ENCODE measurements at regions of chr10 and their contacts with region 1.

Region 1: GRCh38 chr10:117574498-117575146 is 32.1 kb downstream of the EMX2 start:
- DNase-seq: no peak
- ATAC-seq: no peak
- H3K4me3 ChIP-seq: no peak overlapping the region
- H3K27ac ChIP-seq: no peak overlapping the region
- H3K4me1 ChIP-seq: no peaks in the 10 kb centered on the region
- CTCF ChIP-seq: no peak
- EP300 ChIP-seq: no peak
- POLR2A ChIP-seq: no peak
- RAD21 ChIP-seq: no peak

Region 2: GRCh38 chr10:117609095-117609795 is 34.6 kb after region 1 on chr10:
- CTCF ChIA-PET with region 1: interaction called, 3 read pairs
- POLR2A ChIA-PET with region 1: interaction called, 10 read pairs
- DNase-seq: peak; percentile 50 to 84
- ATAC-seq: peak; percentile 95 to 99
- H3K4me3 ChIP-seq: no peak overlapping the region
- H3K27ac ChIP-seq: peak overlapping the region; percentile 56 to 59; a peak in 5 of 6 replicates
- H3K4me1 ChIP-seq: peaks cover 21% of the 10 kb centered on the region
- CTCF ChIP-seq: no peak
- EP300 ChIP-seq: peak in 1 of 2 experiments; percentile 31; a peak in 1 of 5 replicates
- POLR2A ChIP-seq: no peak
- RAD21 ChIP-seq: 0 out of 5 replicates have a peak, but pooled peaks have one; percentile 18

Measured in A549 (cell line).